Caco-2 (cell line): ENCODE measurements at regions of chr17 and their contacts with region 1.

Region 1: DNA sequence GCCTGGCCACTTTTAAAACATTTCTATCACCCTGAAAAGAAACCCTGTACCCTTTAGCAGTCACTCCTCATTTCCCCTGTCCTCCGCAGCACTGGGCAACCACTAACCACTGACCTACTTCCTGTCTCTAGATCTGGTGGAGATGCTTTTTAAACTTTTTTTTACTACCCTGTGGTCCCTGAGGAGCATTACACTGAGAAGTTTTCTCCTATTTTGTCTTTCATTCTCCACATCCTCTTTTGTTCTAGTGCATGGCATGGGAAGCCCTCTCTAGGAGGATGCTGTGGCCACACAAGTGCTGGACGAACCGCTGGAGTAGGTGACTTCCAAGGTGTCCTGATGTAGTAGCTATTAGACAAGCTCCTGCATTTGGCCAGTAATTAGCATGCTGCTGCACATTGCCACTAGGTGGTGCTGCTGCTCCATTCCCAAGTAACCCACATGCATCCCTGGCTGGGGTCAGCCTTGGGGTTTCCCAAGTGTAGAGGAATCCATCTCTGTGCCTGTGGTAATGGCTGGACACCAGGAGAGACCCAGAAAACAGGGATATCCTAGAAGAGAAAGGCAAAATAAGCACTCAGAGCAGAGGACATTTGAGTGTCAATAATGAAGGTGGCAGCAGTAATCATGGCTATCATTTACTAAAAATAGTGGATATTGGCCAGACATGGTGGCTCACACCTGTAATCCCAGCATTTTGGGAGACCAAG is 143.8 kb upstream of the CRHR1 start:
- DNase-seq: peak; percentile 82 to 86
- H3K4me3 ChIP-seq: no peak overlapping the region
- H3K4me3 Mint-ChIP-seq: no peak overlapping the region
- H3K27ac Mint-ChIP-seq: peak overlapping the region; percentile 9
- H3K4me1 ChIP-seq: no peaks in the 10 kb centered on the region
- H3K4me1 Mint-ChIP-seq: no peaks in the 10 kb centered on the region
- H3K27me3 ChIP-seq: no peaks in the 10 kb centered on the region
- H3K27me3 Mint-ChIP-seq: peaks cover 4% of the 10 kb centered on the region
- CTCF ChIP-seq: peak; percentile 95 to 96

Region 2: GRCh38 chr17:45277216-45277849 is 363.0 kb before region 1 on chr17:
- CTCF ChIA-PET with region 1: no interaction called
- POLR2A ChIA-PET with region 1: no interaction called
- intact Hi-C with region 1: no loop called
- DNase-seq: peak; percentile 94 to 95
- H3K4me3 ChIP-seq: no peak overlapping the region
- H3K4me3 Mint-ChIP-seq: peak overlapping the region; percentile 41
- H3K27ac Mint-ChIP-seq: peak overlapping the region; percentile 61
- H3K4me1 ChIP-seq: peaks cover 11% of the 10 kb centered on the region
- H3K4me1 Mint-ChIP-seq: peaks cover 12% of the 10 kb centered on the region
- H3K27me3 ChIP-seq: no peaks in the 10 kb centered on the region
- H3K27me3 Mint-ChIP-seq: no peaks in the 10 kb centered on the region
- CTCF ChIP-seq: peak; percentile 88 to 96

Region 3: GRCh38 chr17:45708707-45709290 is 68.5 kb after region 1 on chr17:
- CTCF ChIA-PET with region 1: no interaction called
- POLR2A ChIA-PET with region 1: no interaction called
- intact Hi-C with region 1: no loop called
- DNase-seq: no peak
- H3K4me3 ChIP-seq: no peak overlapping the region
- H3K4me3 Mint-ChIP-seq: no peak overlapping the region
- H3K27ac Mint-ChIP-seq: no peak overlapping the region
- H3K4me1 ChIP-seq: peaks cover 14% of the 10 kb centered on the region
- H3K4me1 Mint-ChIP-seq: peaks cover 16% of the 10 kb centered on the region
- H3K27me3 ChIP-seq: no peaks in the 10 kb centered on the region
- H3K27me3 Mint-ChIP-seq: peaks cover 6% of the 10 kb centered on the region
- CTCF ChIP-seq: no peak

Region 4: DNA sequence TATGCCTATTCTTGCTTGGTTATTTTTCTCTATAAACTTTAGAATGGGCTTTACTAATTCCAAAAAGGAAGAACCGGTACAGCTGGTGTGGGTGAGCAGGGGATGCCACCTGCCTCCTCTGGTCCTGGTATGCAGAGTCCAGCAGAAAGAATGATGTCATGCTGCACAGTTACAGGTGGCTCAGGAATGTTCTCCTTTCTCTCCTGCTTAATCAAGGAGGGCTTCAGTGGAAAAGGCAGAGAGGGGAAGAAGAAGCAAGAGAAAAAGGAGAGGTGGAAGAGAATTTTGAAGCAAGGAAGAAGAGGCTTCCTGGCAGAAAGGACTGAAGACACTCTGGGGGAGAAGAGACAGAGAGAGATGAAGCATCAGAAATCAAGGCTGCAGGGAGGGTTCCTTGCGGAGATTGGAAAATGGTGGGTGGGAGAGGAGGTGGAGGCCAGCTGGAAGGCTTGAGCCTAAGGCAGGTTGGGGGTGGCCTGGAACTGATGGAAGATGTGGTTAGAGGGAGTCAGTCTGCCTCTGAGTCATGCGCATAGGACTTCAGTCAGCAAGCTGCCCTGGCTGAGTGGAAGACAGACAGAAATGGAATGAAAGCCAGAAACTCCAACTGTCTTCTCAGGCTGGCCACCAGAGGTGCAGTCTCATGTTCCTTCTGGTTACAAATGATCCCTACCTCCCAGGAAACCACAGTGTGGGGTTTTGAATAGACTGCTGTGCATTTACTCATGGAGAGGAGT is 79.2 kb after region 1 on chr17:
- CTCF ChIA-PET with region 1: interaction called, 8 read pairs
- POLR2A ChIA-PET with region 1: no interaction called
- intact Hi-C with region 1: loop called (anchors 5 kb)
- DNase-seq: peak in 1 of 2 experiments; percentile 46
- H3K4me3 ChIP-seq: no peak overlapping the region
- H3K4me3 Mint-ChIP-seq: no peak overlapping the region
- H3K27ac Mint-ChIP-seq: no peak overlapping the region
- H3K4me1 ChIP-seq: 0 out of 2 replicates have a peak, but pooled peaks cover 4% of the 10 kb centered on the region
- H3K4me1 Mint-ChIP-seq: no peaks in the 10 kb centered on the region
- H3K27me3 ChIP-seq: no peaks in the 10 kb centered on the region
- H3K27me3 Mint-ChIP-seq: peaks cover 25% of the 10 kb centered on the region
- CTCF ChIP-seq: peak; percentile 35 to 65

Region 5: DNA sequence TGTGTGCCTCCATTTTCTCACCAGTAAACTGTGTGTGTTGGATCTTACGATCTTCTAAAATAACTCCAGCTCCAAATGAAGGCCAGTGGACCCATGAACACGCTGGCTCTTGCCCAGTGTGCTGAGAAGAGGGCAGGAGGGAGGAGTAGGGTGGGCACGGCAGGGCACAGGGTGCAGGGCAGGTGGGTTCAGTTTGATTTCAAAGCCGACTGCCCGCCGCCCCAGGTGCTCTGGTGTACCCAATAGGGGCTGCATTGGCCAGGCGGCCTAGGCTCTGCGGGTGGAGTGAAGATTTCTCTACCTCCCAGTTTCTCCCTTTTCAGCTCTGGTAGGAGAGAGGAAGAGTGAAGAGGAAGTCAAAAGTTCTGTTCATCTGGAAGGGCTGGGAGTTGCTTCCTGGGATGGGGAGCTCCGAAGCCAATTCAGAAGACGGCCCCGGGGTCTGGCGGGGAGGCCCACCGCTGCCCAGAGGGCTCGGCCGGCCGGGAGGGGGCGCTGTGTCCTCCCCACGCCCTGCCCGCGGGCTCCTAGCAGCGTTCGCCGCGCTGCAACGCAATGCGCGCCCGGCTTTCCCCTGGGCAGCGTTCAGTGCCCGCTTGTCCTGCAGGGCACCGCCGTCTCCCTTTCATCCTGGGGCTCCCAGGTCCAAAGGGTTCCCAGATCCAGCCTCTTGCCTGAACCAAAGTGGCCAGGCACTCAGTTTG is 142.7 kb after region 1 on chr17:
- CTCF ChIA-PET with region 1: interaction called, 4 read pairs
- POLR2A ChIA-PET with region 1: no interaction called
- intact Hi-C with region 1: loop called (anchors 10 kb)
- DNase-seq: peak in 1 of 2 experiments; percentile 46
- H3K4me3 ChIP-seq: peak overlapping the region; percentile 36
- H3K4me3 Mint-ChIP-seq: peak overlapping the region; percentile 72
- H3K27ac Mint-ChIP-seq: no peak overlapping the region
- H3K4me1 ChIP-seq: 0 out of 2 replicates have a peak, but pooled peaks cover 3% of the 10 kb centered on the region
- H3K4me1 Mint-ChIP-seq: no peaks in the 10 kb centered on the region
- H3K27me3 ChIP-seq: peaks cover 3% of the 10 kb centered on the region
- H3K27me3 Mint-ChIP-seq: peaks cover 33% of the 10 kb centered on the region
- CTCF ChIP-seq: peak; percentile 30 to 48

Region 6: GRCh38 chr17:45828628-45829027 is 188.3 kb after region 1 on chr17:
- CTCF ChIA-PET with region 1: interaction called, 32 read pairs
- POLR2A ChIA-PET with region 1: no interaction called
- intact Hi-C with region 1: loop called (anchors 1 kb)
- DNase-seq: no peak
- H3K4me3 ChIP-seq: no peak overlapping the region
- H3K4me3 Mint-ChIP-seq: no peak overlapping the region
- H3K27ac Mint-ChIP-seq: no peak overlapping the region
- H3K4me1 ChIP-seq: no peaks in the 10 kb centered on the region
- H3K4me1 Mint-ChIP-seq: peaks cover 10% of the 10 kb centered on the region
- H3K27me3 ChIP-seq: no peaks in the 10 kb centered on the region; the same call in 1 of the 2 replicates
- H3K27me3 Mint-ChIP-seq: peaks cover 7% of the 10 kb centered on the region
- CTCF ChIP-seq: peak in 1 of 2 experiments; percentile 20

Region 7: DNA sequence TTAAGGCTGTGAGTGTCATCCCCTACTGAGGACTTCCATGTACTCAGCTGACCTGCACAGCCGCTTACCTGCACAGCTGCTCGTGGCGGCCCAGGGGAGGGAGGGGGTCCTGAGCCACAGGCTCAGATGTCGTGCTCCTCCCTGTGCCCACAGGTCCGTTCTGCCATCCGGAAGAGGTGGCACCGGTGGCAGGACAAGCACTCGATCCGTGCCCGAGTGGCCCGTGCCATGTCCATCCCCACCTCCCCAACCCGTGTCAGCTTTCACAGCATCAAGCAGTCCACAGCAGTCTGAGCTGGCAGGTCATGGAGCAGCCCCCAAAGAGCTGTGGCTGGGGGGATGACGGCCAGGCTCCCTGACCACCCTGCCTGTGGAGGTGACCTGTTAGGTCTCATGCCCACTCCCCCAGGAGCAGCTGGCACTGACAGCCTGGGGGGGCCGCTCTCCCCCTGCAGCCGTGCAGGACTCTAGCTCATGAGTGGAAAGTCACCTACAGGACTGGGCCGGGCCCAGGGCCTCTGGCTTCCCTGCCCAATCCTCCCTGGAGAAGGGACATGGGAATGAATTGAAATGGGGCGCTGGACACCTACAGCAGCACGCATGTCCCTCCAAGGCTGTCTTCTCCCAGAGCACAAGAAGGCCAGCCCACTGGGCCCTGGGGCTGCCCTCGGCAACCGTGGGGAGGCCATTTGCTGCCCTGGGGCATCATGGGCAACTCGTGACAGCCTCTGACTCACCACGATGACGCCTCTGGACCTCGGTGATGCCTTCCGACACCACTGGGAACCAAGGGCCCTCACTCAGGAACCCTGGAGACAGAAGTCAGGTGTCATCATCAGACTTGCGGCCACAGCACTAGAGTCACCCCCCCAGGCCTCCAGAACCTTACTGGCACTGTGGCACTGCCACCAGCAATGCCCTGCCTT is 194.4 kb after region 1 on chr17:
- CTCF ChIA-PET with region 1: interaction called, 32 read pairs
- POLR2A ChIA-PET with region 1: no interaction called
- intact Hi-C with region 1: loop called (anchors 1 kb)
- DNase-seq: no peak
- H3K4me3 ChIP-seq: no peak overlapping the region
- H3K4me3 Mint-ChIP-seq: no peak overlapping the region
- H3K27ac Mint-ChIP-seq: no peak overlapping the region
- H3K4me1 ChIP-seq: no peaks in the 10 kb centered on the region
- H3K4me1 Mint-ChIP-seq: no peaks in the 10 kb centered on the region
- H3K27me3 ChIP-seq: no peaks in the 10 kb centered on the region
- H3K27me3 Mint-ChIP-seq: peaks cover 25% of the 10 kb centered on the region
- CTCF ChIP-seq: no peak

Region 8: DNA sequence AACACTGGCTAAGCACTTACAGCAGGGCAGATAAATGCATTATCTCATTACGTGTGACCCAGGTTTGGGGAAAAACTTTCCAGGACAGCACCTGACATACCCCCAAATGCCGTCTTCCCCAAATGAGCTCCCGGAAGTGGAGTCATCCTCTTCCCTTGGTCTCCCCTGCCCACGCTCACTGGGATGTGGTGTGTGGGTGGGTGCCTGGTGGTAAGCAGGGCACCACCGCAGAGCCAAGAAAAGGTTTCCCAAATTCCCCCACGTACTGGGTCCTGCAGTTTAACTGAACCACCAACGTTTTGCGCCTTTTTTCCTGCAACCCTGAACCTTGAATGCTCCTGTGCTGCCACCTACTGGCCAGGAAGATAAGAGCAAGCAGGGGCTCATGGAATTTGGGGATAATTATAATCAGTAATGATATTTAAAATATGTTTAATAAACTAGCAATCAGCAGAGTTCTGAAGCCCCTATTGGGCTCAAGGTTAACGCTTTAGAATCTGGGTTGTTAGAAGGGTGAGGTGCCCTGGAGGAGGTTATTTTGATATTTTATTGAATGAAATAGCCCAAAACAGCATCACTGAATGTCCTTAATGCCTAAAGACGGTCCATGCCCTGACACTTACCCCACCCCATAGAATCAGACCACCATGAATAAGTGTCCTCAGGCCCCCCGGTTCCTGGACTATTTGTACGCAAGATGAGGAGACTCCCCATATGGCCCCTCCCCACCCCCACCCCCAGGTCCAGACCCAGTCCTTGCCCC is 212.4 kb after region 1 on chr17:
- CTCF ChIA-PET with region 1: interaction called, 14 read pairs
- POLR2A ChIA-PET with region 1: no interaction called
- intact Hi-C with region 1: loop called (anchors 1 kb)
- DNase-seq: peak; percentile 66 to 76
- H3K4me3 ChIP-seq: no peak overlapping the region
- H3K4me3 Mint-ChIP-seq: no peak overlapping the region
- H3K27ac Mint-ChIP-seq: no peak overlapping the region
- H3K4me1 ChIP-seq: peaks cover 1% of the 10 kb centered on the region; the same call in 1 of the 2 replicates
- H3K4me1 Mint-ChIP-seq: peaks cover 1% of the 10 kb centered on the region
- H3K27me3 ChIP-seq: no peaks in the 10 kb centered on the region; the same call in 1 of the 2 replicates
- H3K27me3 Mint-ChIP-seq: peaks cover 14% of the 10 kb centered on the region
- CTCF ChIP-seq: peak; percentile 90 to 92

Region 9: DNA sequence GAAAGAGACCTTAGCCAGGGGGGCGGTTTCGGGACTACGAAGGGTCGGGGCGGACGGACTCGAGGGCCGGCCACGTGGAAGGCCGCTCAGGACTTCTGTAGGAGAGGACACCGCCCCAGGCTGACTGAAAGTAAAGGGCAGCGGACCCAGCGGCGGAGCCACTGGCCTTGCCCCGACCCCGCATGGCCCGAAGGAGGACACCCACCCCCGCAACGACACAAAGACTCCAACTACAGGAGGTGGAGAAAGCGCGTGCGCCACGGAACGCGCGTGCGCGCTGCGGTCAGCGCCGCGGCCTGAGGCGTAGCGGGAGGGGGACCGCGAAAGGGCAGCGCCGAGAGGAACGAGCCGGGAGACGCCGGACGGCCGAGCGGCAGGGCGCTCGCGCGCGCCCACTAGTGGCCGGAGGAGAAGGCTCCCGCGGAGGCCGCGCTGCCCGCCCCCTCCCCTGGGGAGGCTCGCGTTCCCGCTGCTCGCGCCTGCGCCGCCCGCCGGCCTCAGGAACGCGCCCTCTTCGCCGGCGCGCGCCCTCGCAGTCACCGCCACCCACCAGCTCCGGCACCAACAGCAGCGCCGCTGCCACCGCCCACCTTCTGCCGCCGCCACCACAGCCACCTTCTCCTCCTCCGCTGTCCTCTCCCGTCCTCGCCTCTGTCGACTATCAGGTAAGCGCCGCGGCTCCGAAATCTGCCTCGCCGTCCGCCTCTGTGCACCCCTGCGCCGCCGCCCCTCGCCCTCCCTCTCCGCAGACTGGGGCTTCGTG is 253.9 kb after region 1 on chr17 and contains the start of gene MAPT:
- CTCF ChIA-PET with region 1: no interaction called
- POLR2A ChIA-PET with region 1: no interaction called
- intact Hi-C with region 1: loop called (anchors 10 kb)
- DNase-seq: peak; percentile 94 to 97
- H3K4me3 ChIP-seq: peak within 1 kb of the TSS; percentile 86
- H3K4me3 Mint-ChIP-seq: peak within 1 kb of the TSS; percentile 83
- H3K27ac Mint-ChIP-seq: peak within 1 kb of the TSS; percentile 59
- H3K4me1 ChIP-seq: peaks cover 7% of the 10 kb centered on the region; the same call in 1 of the 2 replicates
- H3K4me1 Mint-ChIP-seq: no peaks in the 10 kb centered on the region
- H3K27me3 ChIP-seq: 0 out of 2 replicates have a peak, but pooled peaks cover 1% of the 10 kb centered on the region
- H3K27me3 Mint-ChIP-seq: peaks cover 16% of the 10 kb centered on the region
- CTCF ChIP-seq: peak; percentile 71 to 95
- total RNA-seq, gene MAPT: 0.60 and 0.95 TPM in 2 replicates